ENCODE measurements at regions of chr1 and their contacts with region 1.

Region 1: DNA sequence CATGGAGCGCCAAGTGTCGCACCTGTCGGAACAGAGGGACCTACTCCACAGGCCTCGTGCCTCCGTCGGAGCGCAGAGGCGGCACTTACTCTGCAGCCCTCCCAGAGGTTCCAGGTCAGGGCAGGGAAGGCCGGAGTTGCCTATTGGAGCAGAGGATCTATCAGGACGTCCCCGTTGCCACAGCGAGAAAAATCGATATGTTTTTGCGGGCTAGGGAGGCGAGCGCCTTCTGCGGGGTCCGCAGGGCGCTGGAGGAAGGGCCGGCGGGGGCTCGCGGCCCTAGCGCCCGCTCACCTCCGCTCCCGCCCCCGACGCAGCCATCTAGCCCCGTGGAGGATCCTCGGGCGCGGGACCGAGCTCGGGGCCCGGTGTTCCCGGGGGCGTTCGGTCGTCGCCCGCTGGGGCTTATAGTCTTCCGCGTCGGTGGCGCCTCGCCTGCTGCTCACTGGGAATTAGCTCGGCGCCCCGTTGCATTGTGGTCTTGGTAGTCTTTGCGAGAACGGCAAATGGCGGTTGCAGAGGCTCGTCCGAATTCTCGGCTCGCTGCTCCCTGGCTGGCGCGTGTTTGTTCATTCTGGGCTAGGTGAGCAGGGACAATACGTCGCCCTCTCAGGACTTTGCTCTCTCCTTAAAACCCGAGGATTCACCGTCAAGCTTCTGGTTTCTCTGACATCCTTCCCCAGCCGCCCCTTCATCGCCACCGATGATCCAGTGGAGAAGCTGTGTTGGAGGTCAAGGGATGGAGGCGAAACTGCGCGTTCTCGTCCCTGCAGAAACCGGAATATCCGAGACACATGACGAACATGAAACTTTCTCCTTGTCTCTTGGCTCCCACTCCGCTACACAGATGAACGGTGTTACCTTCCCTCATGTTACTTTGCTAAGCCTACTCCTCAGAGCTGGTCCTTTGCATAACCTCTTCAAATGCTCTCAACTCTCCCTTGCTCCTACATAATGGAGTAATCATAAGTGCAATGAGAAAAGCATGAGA is at the start of gene JTB:
- DNase-seq: peak; percentile 91
- ATAC-seq: peak; percentile 96
- H3K4me3 Mint-ChIP-seq: peak within 1 kb of the TSS; percentile 97
- H3K27ac Mint-ChIP-seq: peak within 1 kb of the TSS; percentile 93
- H3K4me1 Mint-ChIP-seq: peaks cover 48% of the 10 kb centered on the region
- H3K27me3 Mint-ChIP-seq: no peaks in the 10 kb centered on the region
- total RNA-seq, gene JTB: 133 to 140 TPM

Region 2: DNA sequence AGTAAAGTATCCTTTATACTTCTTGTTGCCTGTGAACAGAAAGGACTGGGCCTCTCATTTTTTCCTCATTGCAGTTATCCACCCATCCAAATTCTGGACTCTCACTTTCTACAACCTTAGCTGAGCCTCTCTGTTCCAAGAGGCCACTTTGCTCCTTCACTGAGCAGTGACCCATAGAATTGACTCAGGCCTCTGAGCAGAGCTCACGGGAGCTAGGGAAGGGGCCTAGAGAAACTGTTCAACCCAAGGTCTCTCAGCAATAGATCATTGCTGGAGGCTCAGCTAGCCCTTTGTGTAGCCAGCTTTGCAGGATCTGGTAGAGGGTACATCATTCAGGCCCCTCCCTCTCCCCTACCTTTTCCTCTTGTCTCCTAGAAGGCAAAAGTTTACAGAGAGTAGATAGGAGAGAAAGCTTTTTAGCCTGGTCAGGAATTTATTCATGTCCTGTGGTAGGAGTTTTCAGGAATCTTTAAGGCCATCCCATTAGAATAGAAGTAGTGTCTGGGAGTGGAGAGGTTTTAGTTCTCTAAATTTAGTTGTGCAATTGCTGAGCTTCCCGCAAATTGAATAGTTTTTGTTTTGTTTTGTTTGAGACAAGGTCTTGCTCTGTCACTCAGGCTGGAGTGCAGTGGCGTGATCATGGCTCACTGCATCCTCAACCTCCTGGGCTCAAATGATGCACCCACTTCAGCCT is 243.0 kb before region 1 on chr1:
- CTCF ChIA-PET with region 1: no interaction called
- POLR2A ChIA-PET with region 1: no interaction called
- DNase-seq: no peak
- ATAC-seq: no peak
- H3K4me3 Mint-ChIP-seq: no peak overlapping the region
- H3K27ac Mint-ChIP-seq: peak overlapping the region; percentile 57
- H3K4me1 Mint-ChIP-seq: peaks cover 24% of the 10 kb centered on the region
- H3K27me3 Mint-ChIP-seq: no peaks in the 10 kb centered on the region

Region 3: DNA sequence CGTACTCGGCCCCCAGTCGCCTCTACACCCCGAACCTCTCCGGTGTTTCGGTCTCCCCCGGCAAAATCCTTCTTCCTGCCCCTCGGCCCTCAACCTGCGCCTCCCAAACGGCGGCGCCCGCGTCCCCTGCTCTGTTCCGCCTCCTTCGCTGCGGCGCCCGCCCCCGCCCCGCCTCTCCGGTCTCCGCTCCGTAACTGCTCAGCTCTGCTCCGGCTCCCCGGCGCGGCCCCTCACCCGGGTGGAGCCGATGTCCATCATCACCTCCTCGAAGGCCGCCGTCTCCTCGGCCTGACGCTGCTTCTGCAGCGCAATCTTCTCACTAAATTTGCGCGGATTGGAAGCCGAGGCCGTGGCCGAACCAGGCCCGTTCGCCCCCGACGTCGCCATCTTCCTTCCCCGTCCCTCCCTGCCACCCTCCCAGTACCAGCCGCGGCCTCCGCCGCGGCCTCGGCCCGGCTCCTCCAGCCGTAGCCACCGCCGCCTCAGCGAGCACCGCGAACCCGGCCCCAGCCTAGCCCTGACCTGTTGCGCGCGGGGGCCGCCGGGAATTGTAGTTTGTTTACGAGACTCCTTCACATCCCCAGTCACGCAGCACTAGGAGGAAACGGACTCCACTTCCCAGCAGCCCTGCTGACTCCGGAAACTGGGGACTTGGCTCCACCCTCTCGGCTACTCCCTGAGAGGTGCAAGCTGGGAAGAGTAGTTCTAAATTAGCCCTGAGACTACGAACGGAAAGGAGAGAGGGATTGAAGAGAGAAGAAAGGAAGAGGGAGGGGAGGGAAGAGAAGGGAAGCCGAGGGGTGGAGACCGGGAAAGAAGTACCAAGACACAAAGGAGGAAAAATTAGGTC is 19.2 kb before region 1 on chr1 and contains the start of gene CRTC2:
- CTCF ChIA-PET with region 1: interaction called, 12 read pairs
- POLR2A ChIA-PET with region 1: interaction called, 13 read pairs
- DNase-seq: peak; percentile 99
- ATAC-seq: peak; percentile 87
- H3K4me3 Mint-ChIP-seq: peak within 1 kb of the TSS; percentile 95
- H3K27ac Mint-ChIP-seq: peak within 1 kb of the TSS; percentile 94
- H3K4me1 Mint-ChIP-seq: peaks cover 70% of the 10 kb centered on the region
- H3K27me3 Mint-ChIP-seq: no peaks in the 10 kb centered on the region
- total RNA-seq, gene CRTC2: 85.1 to 104 TPM

Region 4: GRCh38 chr1:153967082-153968000 is 10.2 kb before region 1 on chr1 and contains the start of gene CREB3L4:
- CTCF ChIA-PET with region 1: interaction called, 58 read pairs
- POLR2A ChIA-PET with region 1: interaction called, 62 read pairs
- DNase-seq: peak; percentile 91
- ATAC-seq: peak; percentile 88
- H3K4me3 Mint-ChIP-seq: peak within 1 kb of the TSS; percentile 86
- H3K27ac Mint-ChIP-seq: peak within 1 kb of the TSS; percentile 93
- H3K4me1 Mint-ChIP-seq: peaks cover 58% of the 10 kb centered on the region
- H3K27me3 Mint-ChIP-seq: no peaks in the 10 kb centered on the region
- total RNA-seq, gene CREB3L4: 5.7 to 9.0 TPM

Measured in activated CD8-positive, alpha-beta T cell treated with anti-CD3 and anti-CD28 coated beads, Interleukin-2, amount 10 ng/mL, durations not matched to agents 7 days and 5 days (primary cell).